Aorta (tissue), 5 donors: ENCODE measurements at regions of chr5 and their contacts with region 1.

Region 1: GRCh38 chr5:60526336-60526875 is 173.6 kb downstream of the DEPDC1B start:
- DNase-seq: no peak
- ATAC-seq: no peak
- H3K4me3 ChIP-seq: no peak overlapping the region
- H3K27ac ChIP-seq: peak overlapping the region in 1 of 2 donors; percentile 22
- H3K4me1 ChIP-seq: peaks cover 3 to 6% of the 10 kb centered on the region in 2 donors
- H3K27me3 ChIP-seq: no peaks in the 10 kb centered on the region

Region 2: GRCh38 chr5:60077292-60077691 is 449.1 kb before region 1 on chr5:
- intact Hi-C with region 1: no loop called
- DNase-seq: peak in 1 of 2 donors; percentile 44
- ATAC-seq: peak; percentile 38
- H3K4me3 ChIP-seq: no peak overlapping the region
- H3K27ac ChIP-seq: no peak overlapping the region
- H3K4me1 ChIP-seq: no peaks in the 10 kb centered on the region
- H3K27me3 ChIP-seq: no peaks in the 10 kb centered on the region

Region 3: GRCh38 chr5:60487885-60488442 is 38.4 kb before region 1 on chr5:
- intact Hi-C with region 1: loop called in 1 of 2 experiments (anchors 5 kb)
- DNase-seq: no peak
- ATAC-seq: peak; percentile 32
- H3K4me3 ChIP-seq: peak overlapping the region; percentile 81 to 86
- H3K27ac ChIP-seq: peak overlapping the region; percentile 92 to 94
- H3K4me1 ChIP-seq: peaks cover 2 to 5% of the 10 kb centered on the region in 2 donors
- H3K27me3 ChIP-seq: no peaks in the 10 kb centered on the region

Region 4: DNA sequence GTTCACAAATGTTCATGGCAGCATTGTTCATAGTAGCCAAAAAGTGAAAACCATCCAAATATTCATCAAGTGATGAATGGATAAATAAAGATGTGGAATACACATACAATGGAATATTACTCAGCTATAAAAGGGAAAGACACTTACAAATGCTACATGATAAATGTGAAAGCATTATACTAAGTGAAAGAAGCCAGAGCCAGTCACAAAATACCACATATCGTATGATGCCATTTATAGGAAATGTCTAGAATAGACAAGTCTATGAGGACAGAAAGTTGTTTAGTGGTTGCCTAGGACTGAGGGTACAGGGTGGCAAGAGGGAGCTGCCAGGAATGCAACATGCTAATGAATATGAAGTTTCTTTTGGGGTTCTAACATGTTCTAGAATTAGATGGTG is 24.8 kb after region 1 on chr5:
- intact Hi-C with region 1: no loop called
- DNase-seq: no peak
- ATAC-seq: no peak
- H3K4me3 ChIP-seq: no peak overlapping the region
- H3K27ac ChIP-seq: no peak overlapping the region
- H3K4me1 ChIP-seq: peaks cover 0 to 2% of the 10 kb centered on the region in 2 donors
- H3K27me3 ChIP-seq: no peaks in the 10 kb centered on the region